Left ventricle myocardium superior (tissue), 1 donor: ENCODE measurements at regions of chr18 and their contacts with region 1.

Region 1: GRCh38 chr18:74493689-74494088 is 2.5 kb upstream of the CNDP2 start:
- DNase-seq: no peak
- ATAC-seq: no peak

Region 2: GRCh38 chr18:74353169-74353775 is 140.4 kb before region 1 on chr18:
- intact Hi-C with region 1: loop called (anchors 5 kb)
- DNase-seq: peak; percentile 46
- ATAC-seq: peak; percentile 94